ENCODE measurements at regions of chr20 and their contacts with region 1.

Region 1: DNA sequence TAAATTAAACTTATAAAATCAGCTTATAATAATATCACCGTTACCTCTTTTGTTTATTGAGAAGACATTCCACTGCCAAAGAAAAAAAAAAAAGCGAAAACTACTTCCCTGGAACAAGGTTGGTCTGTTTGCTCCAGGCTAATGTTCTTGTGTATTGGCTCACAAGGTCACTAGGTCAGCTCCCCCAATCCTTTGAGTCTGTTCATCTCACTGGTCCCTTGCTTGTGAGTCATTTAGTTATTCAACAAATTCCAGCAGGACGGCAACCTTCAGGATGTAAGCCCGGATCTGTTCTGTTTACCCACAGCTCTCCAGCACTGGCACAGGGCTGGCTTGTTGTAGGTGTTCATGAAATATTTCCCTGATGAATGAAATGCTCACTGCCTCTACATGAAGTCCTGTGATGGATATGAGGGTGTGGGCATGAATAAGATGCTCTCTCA is 3.3 kb downstream of the ARHGAP40 start:
- DNase-seq: no peak
- H3K4me3 ChIP-seq: no peak overlapping the region
- H3K27ac ChIP-seq: no peak overlapping the region
- H3K4me1 ChIP-seq: peaks cover 9% of the 10 kb centered on the region
- H3K27me3 ChIP-seq: peaks cover 25% of the 10 kb centered on the region
- CTCF ChIP-seq: no peak

Region 2: DNA sequence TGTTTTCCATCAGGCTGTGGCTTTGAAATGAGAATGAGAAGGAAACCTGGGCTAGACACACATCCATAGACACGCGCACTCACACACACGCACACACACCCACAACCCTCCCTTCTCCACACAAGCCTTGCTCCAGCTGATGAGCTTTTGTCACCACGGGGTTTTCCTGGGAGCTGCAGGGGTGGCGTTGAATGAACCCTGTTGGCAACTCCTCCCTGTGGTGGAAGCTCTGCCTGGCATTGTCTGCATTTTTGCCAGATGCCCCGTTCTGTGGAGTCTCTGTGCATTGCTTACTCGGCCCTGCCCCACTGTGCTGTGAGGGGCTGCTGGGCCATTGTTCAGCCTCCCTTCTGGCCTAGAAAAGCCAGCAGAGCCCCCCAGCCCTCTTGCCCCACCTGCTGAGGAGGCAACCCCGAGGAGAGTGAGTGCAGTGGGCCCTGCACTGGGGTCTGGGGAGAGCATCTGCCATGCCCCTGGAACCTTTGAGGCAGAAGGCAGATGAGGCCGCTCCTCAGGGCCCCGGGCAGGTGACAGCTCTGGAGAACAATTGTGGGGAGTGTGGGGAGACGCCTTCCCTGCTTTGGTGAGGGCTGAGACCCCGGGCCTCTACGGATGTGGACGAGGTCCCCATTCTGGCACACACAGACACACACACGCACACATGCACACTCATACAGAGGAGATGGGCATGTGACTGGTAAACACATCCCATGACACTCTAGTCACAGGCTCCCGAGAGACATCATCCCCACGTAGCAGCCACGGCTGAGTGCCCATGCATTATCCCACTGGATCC is 14.0 kb before region 1 on chr20:
- CTCF ChIA-PET with region 1: no interaction called
- POLR2A ChIA-PET with region 1: no interaction called
- intact Hi-C with region 1: no loop called
- DNase-seq: peak; percentile 40
- H3K4me3 ChIP-seq: no peak overlapping the region
- H3K27ac ChIP-seq: no peak overlapping the region
- H3K4me1 ChIP-seq: no peaks in the 10 kb centered on the region
- H3K27me3 ChIP-seq: no peaks in the 10 kb centered on the region
- CTCF ChIP-seq: no peak

Region 3: DNA sequence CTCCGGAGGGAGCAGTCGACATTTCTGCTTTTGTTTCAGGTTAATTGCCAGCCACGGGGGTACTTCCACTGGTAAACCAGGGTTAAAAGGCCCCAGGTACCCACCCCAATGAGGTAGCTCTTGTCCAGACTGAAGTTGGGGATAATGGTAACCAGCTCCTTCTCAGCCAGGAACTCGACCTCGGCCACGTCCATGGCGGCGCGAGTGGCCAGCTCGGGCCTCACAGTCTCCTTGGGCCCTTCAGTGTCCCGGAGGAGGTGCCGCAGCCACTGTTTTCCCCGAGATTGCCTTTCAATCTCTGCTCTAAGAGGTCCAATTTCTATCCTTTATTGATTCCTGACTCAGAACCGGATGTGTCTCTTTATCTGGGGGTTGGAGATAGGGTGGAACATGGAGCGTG is 10.4 kb after region 1 on chr20:
- CTCF ChIA-PET with region 1: interaction called, 3 read pairs
- POLR2A ChIA-PET with region 1: interaction called, 16 read pairs
- intact Hi-C with region 1: no loop called
- DNase-seq: no peak
- H3K4me3 ChIP-seq: no peak overlapping the region
- H3K27ac ChIP-seq: no peak overlapping the region
- H3K4me1 ChIP-seq: no peaks in the 10 kb centered on the region
- H3K27me3 ChIP-seq: peaks cover 11% of the 10 kb centered on the region
- CTCF ChIP-seq: no peak

Region 4: DNA sequence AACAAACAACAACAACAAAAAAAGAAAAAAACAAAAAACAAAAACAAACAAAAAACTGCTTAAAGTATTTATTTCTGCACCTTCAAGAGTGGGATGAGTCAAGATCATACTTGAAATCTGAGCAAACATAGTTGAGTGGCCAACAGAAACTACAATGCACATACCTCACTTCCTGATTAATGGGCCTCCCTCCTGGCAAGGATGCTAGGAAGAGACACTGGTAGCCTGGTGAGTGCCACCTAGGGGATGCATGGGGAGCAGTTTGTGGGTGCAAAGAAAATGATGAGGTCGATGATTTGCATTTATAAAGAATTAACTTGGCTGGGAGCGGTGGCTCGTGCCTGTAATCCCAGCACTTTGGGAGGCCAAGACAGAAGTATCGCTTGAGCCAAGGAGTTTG is 1276.0 kb after region 1 on chr20:
- CTCF ChIA-PET with region 1: no interaction called
- POLR2A ChIA-PET with region 1: no interaction called
- intact Hi-C with region 1: no loop called
- DNase-seq: peak; percentile 56
- H3K4me3 ChIP-seq: no peak overlapping the region
- H3K27ac ChIP-seq: no peak overlapping the region
- H3K4me1 ChIP-seq: no peaks in the 10 kb centered on the region
- H3K27me3 ChIP-seq: no peaks in the 10 kb centered on the region
- CTCF ChIP-seq: peak; percentile 50

Measured in A673 (cell line).